Activated CD8-positive, alpha-beta T cell treated with anti-CD3 and anti-CD28 coated beads for 36 hours (primary cell): ENCODE measurements at regions of chr9 and their contacts with region 1.

Region 1: GRCh38 chr9:9924376-9924775 is 688.4 kb downstream of the PTPRD start:
- DNase-seq: no peak
- ATAC-seq: no peak
- H3K4me3 Mint-ChIP-seq: no peak overlapping the region
- H3K27ac Mint-ChIP-seq: no peak overlapping the region
- H3K4me1 Mint-ChIP-seq: no peaks in the 10 kb centered on the region
- H3K27me3 Mint-ChIP-seq: no peaks in the 10 kb centered on the region
- CTCF ChIP-seq: no peak

Region 2: DNA sequence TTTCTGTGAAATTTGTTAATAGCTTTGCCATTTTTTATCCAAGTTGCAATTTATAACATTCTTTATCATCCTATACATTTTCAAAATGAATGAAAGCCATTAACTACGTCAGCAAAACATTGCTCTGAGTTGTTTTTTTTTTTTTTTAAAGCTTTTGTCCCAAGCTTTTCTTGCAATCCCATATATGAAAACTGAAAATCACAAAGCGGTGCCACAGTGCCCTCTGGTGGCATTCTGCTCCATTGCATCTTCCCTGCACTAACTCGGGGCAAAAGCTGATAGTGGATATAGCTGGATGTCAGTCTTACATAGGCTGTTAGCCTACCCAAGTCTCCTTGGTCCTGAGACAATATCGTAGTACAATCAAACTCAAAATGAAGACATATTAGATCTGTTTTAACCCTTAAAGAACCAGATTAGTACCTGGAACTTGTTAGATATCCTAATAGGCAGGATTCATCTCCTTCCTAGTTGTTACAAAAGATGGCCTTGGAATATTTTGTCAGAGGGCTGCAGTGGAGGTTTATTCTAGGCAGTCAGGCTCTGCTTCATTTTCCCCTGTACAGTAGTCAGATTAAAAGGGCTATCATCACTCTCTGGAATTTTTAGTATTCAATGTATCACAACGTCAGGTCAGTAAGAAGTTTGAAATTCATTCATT is 18.5 kb after region 1 on chr9:
- CTCF ChIA-PET with region 1: interaction called, 16 read pairs
- POLR2A ChIA-PET with region 1: no interaction called
- intact Hi-C with region 1: no loop called
- DNase-seq: peak; percentile 57
- ATAC-seq: peak; percentile 56
- H3K4me3 Mint-ChIP-seq: no peak overlapping the region
- H3K27ac Mint-ChIP-seq: no peak overlapping the region
- H3K4me1 Mint-ChIP-seq: no peaks in the 10 kb centered on the region
- H3K27me3 Mint-ChIP-seq: peaks cover 1% of the 10 kb centered on the region
- CTCF ChIP-seq: peak; percentile 87